ENCODE measurements at regions of chr10 and their contacts with region 1.

Region 1: DNA sequence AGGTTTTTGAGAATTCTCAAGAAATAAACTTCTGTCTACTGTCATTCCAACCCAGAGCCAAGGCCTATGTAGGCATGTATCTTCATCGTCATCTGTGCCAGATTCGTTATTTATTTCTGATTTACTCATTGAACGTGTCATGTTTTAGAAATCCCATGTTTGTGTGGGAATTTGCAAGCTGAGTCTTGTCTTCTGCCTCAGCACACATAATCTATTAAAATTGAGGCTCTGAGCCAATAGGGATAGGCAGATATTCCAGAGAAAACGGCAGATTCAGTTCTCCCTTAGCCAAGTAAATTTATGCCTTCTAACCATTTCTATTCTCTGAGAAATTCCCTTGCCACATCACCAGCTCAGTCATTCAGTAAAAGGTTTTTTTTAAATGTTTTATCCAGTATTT is 444.6 kb downstream of the REEP3 start:
- DNase-seq: no peak
- H3K4me3 ChIP-seq: no peak overlapping the region
- H3K27ac ChIP-seq: no peak overlapping the region
- H3K4me1 ChIP-seq: no peaks in the 10 kb centered on the region
- H3K27me3 ChIP-seq: no peaks in the 10 kb centered on the region
- CTCF ChIP-seq: no peak
- POLR2A ChIP-seq: no peak

Region 2: GRCh38 chr10:63935705-63936104 is 30.1 kb before region 1 on chr10:
- CTCF ChIA-PET with region 1: no interaction called
- POLR2A ChIA-PET with region 1: no interaction called
- dilution Hi-C with region 1: no loop called
- intact Hi-C with region 1: no loop called
- DNase-seq: no peak
- H3K4me3 ChIP-seq: no peak overlapping the region
- H3K27ac ChIP-seq: no peak overlapping the region
- H3K4me1 ChIP-seq: no peaks in the 10 kb centered on the region
- H3K27me3 ChIP-seq: no peaks in the 10 kb centered on the region
- CTCF ChIP-seq: no peak
- POLR2A ChIP-seq: no peak

Region 3: DNA sequence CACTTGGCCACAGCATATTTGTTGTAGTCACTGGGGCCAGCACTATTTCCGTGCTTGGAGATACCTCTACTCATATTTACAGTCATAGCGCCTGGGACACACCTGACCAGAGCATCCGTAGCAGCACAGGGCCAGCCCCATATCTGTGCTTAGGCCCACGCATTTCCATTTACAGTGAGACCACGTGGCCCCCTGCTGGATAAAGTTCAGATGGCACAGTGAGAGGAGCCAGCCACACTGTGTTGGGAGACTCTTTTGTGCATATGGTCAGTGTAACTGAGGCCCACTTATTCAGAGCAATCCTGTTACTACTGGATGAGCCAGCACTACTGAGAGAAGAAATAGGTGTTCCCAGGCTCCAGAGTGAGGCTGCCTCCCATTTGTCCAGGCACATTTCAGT is 10.7 kb after region 1 on chr10:
- CTCF ChIA-PET with region 1: interaction called, 10 read pairs
- POLR2A ChIA-PET with region 1: no interaction called
- dilution Hi-C with region 1: no loop called
- intact Hi-C with region 1: no loop called
- DNase-seq: peak; percentile 39
- H3K4me3 ChIP-seq: no peak overlapping the region
- H3K27ac ChIP-seq: no peak overlapping the region
- H3K4me1 ChIP-seq: no peaks in the 10 kb centered on the region
- H3K27me3 ChIP-seq: no peaks in the 10 kb centered on the region
- CTCF ChIP-seq: peak; percentile 51 to 69
- POLR2A ChIP-seq: no peak

Region 4: GRCh38 chr10:64011912-64012714 is 46.3 kb after region 1 on chr10:
- CTCF ChIA-PET with region 1: no interaction called
- POLR2A ChIA-PET with region 1: no interaction called
- dilution Hi-C with region 1: no loop called
- intact Hi-C with region 1: no loop called
- DNase-seq: no peak
- H3K4me3 ChIP-seq: no peak overlapping the region
- H3K27ac ChIP-seq: no peak overlapping the region
- H3K4me1 ChIP-seq: no peaks in the 10 kb centered on the region
- H3K27me3 ChIP-seq: no peaks in the 10 kb centered on the region
- CTCF ChIP-seq: no peak
- POLR2A ChIP-seq: no peak

Region 5: DNA sequence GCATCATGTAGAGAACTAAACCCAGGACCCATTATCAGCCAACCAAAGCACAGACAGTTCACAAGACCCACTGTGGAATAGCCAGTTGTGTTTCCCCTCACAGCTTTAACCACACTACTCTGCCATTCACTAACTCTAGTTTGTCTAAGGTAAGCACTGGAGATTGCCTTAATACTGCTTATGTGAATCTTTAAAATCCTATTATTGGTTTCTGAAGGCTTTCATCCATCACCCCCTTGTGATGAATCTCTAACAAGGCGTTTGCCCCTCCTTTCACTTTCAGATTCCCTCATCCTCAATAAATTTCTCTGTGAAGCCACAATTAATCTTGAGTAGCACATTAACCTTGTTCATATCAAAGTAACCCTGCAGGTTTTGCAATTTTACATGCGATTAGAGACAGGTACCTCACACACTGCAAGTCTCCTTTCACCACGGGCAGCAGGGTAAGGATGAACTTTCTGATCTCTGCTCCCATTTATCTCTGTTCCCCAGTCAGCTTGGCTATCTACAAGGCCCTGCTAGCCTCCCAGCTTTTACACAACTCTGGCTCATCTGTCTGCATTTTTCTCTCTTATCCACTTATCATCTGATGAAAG is 341.0 kb after region 1 on chr10:
- CTCF ChIA-PET with region 1: no interaction called
- POLR2A ChIA-PET with region 1: no interaction called
- dilution Hi-C with region 1: no loop called
- intact Hi-C with region 1: no loop called
- DNase-seq: no peak
- H3K4me3 ChIP-seq: no peak overlapping the region
- H3K27ac ChIP-seq: no peak overlapping the region
- H3K4me1 ChIP-seq: no peaks in the 10 kb centered on the region
- H3K27me3 ChIP-seq: no peaks in the 10 kb centered on the region
- CTCF ChIP-seq: no peak
- POLR2A ChIP-seq: no peak

Measured in endothelial cell of umbilical vein (primary cell).